ENCODE measurements at regions of chr7 and their contacts with region 1.

Region 1: GRCh38 chr7:128883622-128884501 is 21.2 kb downstream of the ATP6V1F start:
- DNase-seq: peak; percentile 86 to 92
- ATAC-seq: peak; percentile 37 to 66 (median 49)
- H3K4me3 ChIP-seq: no peak overlapping the region
- H3K27ac ChIP-seq: no peak overlapping the region
- H3K4me1 ChIP-seq: peaks cover 12% of the 10 kb centered on the region
- H3K27me3 ChIP-seq: no peaks in the 10 kb centered on the region
- CTCF ChIP-seq: peak; percentile 95

Region 2: DNA sequence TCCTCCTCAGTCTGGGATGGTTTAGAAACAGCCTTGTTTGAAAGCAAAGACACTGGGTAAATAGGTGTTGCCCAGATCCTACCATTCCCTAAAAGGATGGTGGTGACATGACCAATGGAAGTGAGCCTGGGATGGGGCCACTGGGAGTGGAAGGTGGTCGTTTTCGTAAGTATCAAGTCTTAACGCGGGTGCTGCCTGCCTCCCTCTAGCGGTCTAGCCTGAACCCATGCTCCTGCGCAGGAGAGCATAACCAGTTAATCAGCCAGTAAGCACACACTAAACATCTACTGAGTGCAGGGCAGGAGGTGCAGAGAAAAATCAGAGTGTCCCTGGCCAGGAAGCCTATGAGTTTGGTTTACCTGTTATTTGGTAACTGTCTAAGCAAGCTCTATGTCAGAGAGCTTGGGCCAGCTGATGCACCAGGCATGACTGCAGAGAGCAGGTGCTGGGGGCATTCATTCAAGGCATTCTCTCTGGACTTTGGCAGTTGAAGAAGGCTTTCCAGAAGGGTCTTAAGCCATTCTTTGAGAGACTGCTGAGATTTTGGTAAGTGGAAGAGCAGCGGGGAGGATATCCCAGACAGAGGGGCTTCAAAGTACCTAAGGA is 210.8 kb before region 1 on chr7:
- intact Hi-C with region 1: loop called in 1 of 2 experiments (anchors 5 kb)
- DNase-seq: no peak
- ATAC-seq: peak; percentile 56 to 72 (median 67)
- H3K4me3 ChIP-seq: no peak overlapping the region
- H3K27ac ChIP-seq: no peak overlapping the region
- H3K4me1 ChIP-seq: peaks cover 14% of the 10 kb centered on the region
- H3K27me3 ChIP-seq: no peaks in the 10 kb centered on the region
- CTCF ChIP-seq: peak; percentile 28

Region 3: GRCh38 chr7:128791121-128791961 is 92.5 kb before region 1 on chr7:
- intact Hi-C with region 1: loop called in 1 of 2 experiments (anchors 1 kb)
- DNase-seq: peak; percentile 81 to 84
- ATAC-seq: peak; percentile 77 to 84 (median 79)
- H3K4me3 ChIP-seq: peak overlapping the region; percentile 87
- H3K27ac ChIP-seq: peak overlapping the region; percentile 30
- H3K4me1 ChIP-seq: peaks cover 20% of the 10 kb centered on the region
- H3K27me3 ChIP-seq: no peaks in the 10 kb centered on the region
- CTCF ChIP-seq: no peak